H1 (cell line): ENCODE measurements at regions of chr4 and their contacts with region 1.

Region 1: DNA sequence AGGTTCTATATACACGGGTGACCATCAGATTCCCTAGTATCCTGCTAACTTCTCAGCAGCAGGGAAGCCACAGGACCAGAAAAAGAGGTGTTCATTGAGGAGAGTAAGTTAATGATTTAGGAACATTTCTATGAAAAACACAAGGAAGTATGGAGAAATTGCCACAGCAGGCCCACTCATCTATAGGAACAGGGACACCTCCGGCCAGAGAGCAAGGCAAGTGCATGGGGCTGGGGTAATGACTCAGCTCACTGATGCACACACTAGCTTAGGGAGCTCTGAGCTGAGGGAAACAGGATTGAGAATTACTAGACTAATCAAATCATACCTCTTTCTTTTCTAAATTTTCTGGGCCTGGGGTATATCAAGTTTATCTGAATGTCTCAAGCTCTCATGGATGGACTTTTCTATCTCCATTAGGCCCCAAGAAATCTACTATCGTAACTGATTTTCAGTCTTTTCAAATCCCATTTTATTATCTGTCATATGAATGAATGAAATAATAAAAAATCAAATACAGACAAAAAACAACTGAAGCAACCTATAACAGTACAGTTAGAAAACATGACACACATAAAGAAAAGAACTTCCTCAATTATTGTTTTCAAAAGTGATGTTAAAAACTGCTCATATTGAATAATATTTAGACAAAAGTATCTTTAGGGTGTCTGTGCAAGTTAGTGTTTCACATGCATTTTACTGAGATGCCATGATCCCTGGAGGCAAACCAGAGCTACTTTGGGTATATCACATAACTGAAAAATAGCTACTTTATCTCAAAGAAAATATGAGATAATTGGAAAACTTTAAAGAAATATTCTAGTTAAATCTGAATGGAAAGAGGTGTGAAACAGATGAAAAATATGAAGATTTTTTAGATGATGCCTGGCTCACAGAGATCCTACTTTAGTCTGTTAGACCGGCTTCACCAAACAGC is 89.8 kb downstream of the FBXO8 start:
- DNase-seq: no peak
- H3K4me3 ChIP-seq: no peak overlapping the region
- H3K27ac ChIP-seq: no peak overlapping the region
- H3K4me1 ChIP-seq: no peaks in the 10 kb centered on the region
- H3K27me3 ChIP-seq: no peaks in the 10 kb centered on the region
- CTCF ChIP-seq: no peak
- EP300 ChIP-seq: no peak
- POLR2A ChIP-seq: no peak
- RAD21 ChIP-seq: no peak

Region 2: GRCh38 chr4:174210354-174210753 is 16.6 kb after region 1 on chr4:
- CTCF ChIA-PET with region 1: interaction called, 12 read pairs
- POLR2A ChIA-PET with region 1: interaction called, 3 read pairs
- DNase-seq: no peak
- H3K4me3 ChIP-seq: no peak overlapping the region
- H3K27ac ChIP-seq: no peak overlapping the region
- H3K4me1 ChIP-seq: peaks cover 5 to 18% (median 10%) of the 10 kb centered on the region in 4 experiments
- H3K27me3 ChIP-seq: peaks cover 41 to 48% (median 47%) of the 10 kb centered on the region in 4 experiments
- CTCF ChIP-seq: peak in 1 of 3 experiments; percentile 53; a peak in 2 of 4 replicates
- EP300 ChIP-seq: no peak
- POLR2A ChIP-seq: no peak
- RAD21 ChIP-seq: peak; percentile 16 to 34; a peak in 3 of 4 replicates

Region 3: DNA sequence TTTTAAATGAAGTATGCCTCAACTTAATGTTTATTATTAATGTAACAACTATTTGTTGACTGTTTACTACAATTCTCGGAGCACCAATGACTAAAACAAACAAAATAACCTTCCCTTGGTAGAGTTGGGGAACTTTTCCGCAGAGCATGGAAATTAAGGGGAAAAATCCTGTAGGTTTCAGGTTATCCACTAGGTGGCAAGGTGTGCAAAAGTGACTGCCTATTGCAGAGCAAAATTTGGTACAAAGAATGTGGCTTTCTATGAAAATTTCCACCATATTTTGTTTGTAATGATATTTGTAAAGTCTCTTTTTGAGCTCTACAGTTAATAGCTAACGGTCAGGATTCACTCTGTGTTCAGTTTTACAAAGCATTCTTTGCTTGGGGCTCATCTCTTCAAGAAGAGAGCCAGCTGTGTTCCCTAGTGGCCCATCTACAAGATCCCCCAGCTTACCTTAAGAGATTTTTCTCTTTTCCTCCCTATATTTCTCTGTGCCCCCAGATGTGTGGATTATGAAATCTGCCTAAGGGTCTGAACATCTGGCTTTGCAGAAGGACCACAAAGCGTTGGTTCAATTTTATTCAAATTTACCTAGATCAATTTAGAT is 28.7 kb after region 1 on chr4:
- CTCF ChIA-PET with region 1: interaction called, 11 read pairs
- POLR2A ChIA-PET with region 1: no interaction called
- DNase-seq: no peak
- H3K4me3 ChIP-seq: no peak overlapping the region
- H3K27ac ChIP-seq: no peak overlapping the region
- H3K4me1 ChIP-seq: peaks cover 0 to 8% (median 5%) of the 10 kb centered on the region in 4 experiments; a peak in 5 of 7 replicates
- H3K27me3 ChIP-seq: peaks cover 12 to 28% (median 19%) of the 10 kb centered on the region in 4 experiments
- CTCF ChIP-seq: peak in 2 of 3 experiments; percentile 52 to 66; a peak in 3 of 4 replicates
- EP300 ChIP-seq: no peak
- POLR2A ChIP-seq: no peak
- RAD21 ChIP-seq: peak; percentile 39 to 52

Region 4: DNA sequence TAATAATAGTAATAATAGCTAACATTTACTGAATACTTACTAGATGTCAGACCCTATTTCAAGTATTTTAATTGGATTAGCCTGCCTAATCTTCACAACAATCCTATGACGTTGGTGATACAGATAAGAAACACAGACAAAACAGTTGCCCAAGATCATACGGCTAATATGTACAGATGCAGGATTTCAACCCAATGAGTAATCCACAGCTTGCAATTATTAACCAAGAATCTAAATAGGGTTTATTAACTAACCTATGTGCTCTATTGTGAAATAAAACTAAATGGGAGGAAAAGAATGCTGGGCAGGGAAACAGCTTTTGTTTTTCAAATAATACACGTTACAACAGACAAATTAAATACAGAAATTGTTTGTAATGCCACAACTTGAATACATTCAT is 66.4 kb after region 1 on chr4:
- CTCF ChIA-PET with region 1: no interaction called
- POLR2A ChIA-PET with region 1: no interaction called
- DNase-seq: no peak
- H3K4me3 ChIP-seq: no peak overlapping the region
- H3K27ac ChIP-seq: no peak overlapping the region
- H3K4me1 ChIP-seq: no peaks in the 10 kb centered on the region
- H3K27me3 ChIP-seq: no peaks in the 10 kb centered on the region
- CTCF ChIP-seq: no peak
- EP300 ChIP-seq: no peak
- POLR2A ChIP-seq: no peak
- RAD21 ChIP-seq: no peak